Endothelial cell of umbilical vein (primary cell): ENCODE measurements at regions of chr7 and their contacts with region 1.

Region 1: DNA sequence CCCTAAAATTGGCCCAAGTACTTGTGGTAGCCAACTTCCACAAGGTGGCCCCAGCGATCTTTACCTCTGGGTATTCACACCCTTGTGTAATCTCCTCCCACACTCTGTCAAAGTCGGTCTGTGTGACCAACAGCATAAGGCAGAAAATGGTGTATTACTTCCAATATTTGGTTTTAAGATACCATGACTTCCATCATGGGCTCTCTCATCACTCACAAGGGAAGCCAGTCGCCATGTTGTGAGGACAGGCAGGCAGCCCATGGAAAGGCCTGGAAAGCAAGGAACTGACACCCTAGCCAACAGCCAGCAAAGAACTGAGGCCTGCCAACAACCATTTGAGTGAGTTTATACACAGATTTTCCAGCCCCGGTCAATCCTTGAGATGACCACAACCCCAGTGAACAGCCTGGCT is 91.0 kb upstream of the KMT2E start:
- DNase-seq: peak; percentile 95
- H3K4me3 ChIP-seq: no peak overlapping the region
- H3K27ac ChIP-seq: peak overlapping the region; percentile 50
- H3K4me1 ChIP-seq: peaks cover 15% of the 10 kb centered on the region
- H3K27me3 ChIP-seq: peaks cover 0 to 3% of the 10 kb centered on the region in 2 experiments
- CTCF ChIP-seq: peak; percentile 78 to 86
- POLR2A ChIP-seq: no peak

Region 2: DNA sequence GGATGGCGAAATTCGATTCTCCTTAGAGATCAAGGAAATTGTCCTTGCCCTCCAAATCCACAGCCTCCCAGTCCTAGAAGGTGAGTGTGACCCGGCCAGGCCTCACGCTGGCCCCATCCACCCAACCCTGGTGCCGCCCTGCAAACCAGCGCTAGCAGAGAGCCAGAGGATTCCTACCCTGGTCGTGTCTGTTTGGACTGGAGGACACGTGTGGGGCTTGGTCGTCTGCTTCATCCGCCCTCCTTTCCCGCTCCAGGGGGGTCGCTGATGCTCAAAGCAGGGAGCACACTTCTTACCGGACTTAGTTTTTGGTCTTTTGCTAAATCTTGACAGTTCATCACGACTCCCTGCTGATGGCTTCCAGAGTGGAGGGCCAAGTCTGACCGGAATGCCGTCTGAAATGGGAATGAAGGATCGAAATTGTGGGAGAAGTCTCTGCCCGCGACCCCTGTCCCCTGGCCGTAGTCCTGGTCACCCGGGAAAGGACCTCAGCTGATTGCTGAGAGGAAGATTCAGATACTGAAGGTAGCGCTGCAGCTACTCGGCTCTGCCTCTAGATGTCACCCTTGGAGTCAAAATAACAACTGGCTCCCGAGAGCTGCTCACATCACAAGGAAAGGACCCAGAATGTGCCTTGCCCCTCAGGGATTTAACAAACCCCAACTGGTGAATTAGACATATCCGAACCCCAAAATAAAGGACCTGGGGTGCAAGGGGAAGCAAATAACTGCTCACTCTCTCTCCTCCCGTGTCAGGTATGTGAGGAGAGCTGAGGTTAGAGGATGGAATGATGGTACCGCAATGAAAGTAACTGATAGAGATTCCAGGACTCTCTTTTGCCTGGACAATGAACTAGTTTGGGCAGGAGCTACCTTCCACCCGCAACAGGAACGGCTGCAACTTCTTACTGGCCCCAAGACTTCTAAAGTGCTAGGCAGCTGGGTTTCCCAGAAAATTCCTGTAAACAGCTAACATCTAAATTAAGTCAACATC is 691.7 kb before region 1 on chr7:
- CTCF ChIA-PET with region 1: interaction called, 49 read pairs
- POLR2A ChIA-PET with region 1: no interaction called
- dilution Hi-C with region 1: no loop called
- intact Hi-C with region 1: loop called (anchors 1 kb)
- DNase-seq: peak; percentile 49
- H3K4me3 ChIP-seq: no peak overlapping the region
- H3K27ac ChIP-seq: no peak overlapping the region
- H3K4me1 ChIP-seq: no peaks in the 10 kb centered on the region
- H3K27me3 ChIP-seq: peaks cover 6 to 29% of the 10 kb centered on the region in 2 experiments
- CTCF ChIP-seq: peak; percentile 70 to 85
- POLR2A ChIP-seq: no peak

Region 3: DNA sequence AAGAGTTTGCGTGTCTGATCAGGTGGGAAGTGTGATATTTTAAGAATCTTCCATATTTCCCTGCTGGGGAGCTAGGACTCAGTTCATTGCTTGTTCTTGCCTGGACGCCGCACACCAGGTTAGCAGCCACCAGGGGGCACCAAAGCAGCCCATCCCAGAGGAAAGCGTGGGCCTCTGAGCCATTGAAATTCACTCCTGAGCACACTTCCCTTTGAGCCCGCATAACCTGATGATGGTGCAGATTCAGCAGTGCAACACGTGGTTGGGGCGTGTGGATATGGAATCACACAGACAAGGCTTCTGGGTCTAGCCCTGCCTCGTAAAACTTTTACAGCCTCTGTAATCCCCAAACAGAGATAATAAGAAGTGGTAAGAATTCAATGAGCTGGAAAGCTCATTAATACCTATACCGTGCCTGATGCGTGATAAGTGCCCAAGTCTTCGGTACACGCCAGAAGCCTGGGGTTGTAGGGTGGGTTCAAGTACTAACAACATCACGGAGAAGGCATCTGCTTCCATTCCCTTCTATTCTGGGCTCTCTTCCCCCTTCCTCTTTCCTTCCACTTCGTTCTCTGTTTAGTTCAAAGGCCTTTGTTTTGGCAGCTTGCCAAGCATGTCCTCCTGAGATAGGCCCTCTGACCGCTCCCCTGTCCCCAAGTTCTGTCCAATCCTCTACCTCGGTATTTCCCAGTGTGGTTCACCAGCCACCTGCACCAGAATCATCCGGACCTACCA is 39.1 kb before region 1 on chr7:
- CTCF ChIA-PET with region 1: interaction called, 228 read pairs
- POLR2A ChIA-PET with region 1: interaction called, 4 read pairs
- dilution Hi-C with region 1: no loop called
- intact Hi-C with region 1: loop called (anchors 1 kb)
- DNase-seq: peak; percentile 87
- H3K4me3 ChIP-seq: peak overlapping the region in 1 of 3 experiments; percentile 35
- H3K27ac ChIP-seq: peak overlapping the region; percentile 31
- H3K4me1 ChIP-seq: peaks cover 5% of the 10 kb centered on the region
- H3K27me3 ChIP-seq: peaks cover 2 to 3% of the 10 kb centered on the region in 2 experiments
- CTCF ChIP-seq: peak; percentile 96 to 97
- POLR2A ChIP-seq: no peak

Region 4: GRCh38 chr7:104943502-104944343 is 20.7 kb after region 1 on chr7:
- CTCF ChIA-PET with region 1: interaction called, 8 read pairs
- POLR2A ChIA-PET with region 1: no interaction called
- dilution Hi-C with region 1: no loop called
- intact Hi-C with region 1: loop called (anchors 1 kb)
- DNase-seq: peak; percentile 100
- H3K4me3 ChIP-seq: no peak overlapping the region
- H3K27ac ChIP-seq: peak overlapping the region; percentile 86
- H3K4me1 ChIP-seq: peaks cover 35% of the 10 kb centered on the region
- H3K27me3 ChIP-seq: no peaks in the 10 kb centered on the region
- CTCF ChIP-seq: no peak
- POLR2A ChIP-seq: no peak

Region 5: GRCh38 chr7:105046414-105046813 is 123.4 kb after region 1 on chr7:
- CTCF ChIA-PET with region 1: interaction called, 7 read pairs
- POLR2A ChIA-PET with region 1: no interaction called
- dilution Hi-C with region 1: no loop called
- intact Hi-C with region 1: loop called (anchors 1 kb)
- DNase-seq: no peak
- H3K4me3 ChIP-seq: no peak overlapping the region
- H3K27ac ChIP-seq: no peak overlapping the region
- H3K4me1 ChIP-seq: no peaks in the 10 kb centered on the region
- H3K27me3 ChIP-seq: no peaks in the 10 kb centered on the region
- CTCF ChIP-seq: no peak
- POLR2A ChIP-seq: no peak

Region 6: DNA sequence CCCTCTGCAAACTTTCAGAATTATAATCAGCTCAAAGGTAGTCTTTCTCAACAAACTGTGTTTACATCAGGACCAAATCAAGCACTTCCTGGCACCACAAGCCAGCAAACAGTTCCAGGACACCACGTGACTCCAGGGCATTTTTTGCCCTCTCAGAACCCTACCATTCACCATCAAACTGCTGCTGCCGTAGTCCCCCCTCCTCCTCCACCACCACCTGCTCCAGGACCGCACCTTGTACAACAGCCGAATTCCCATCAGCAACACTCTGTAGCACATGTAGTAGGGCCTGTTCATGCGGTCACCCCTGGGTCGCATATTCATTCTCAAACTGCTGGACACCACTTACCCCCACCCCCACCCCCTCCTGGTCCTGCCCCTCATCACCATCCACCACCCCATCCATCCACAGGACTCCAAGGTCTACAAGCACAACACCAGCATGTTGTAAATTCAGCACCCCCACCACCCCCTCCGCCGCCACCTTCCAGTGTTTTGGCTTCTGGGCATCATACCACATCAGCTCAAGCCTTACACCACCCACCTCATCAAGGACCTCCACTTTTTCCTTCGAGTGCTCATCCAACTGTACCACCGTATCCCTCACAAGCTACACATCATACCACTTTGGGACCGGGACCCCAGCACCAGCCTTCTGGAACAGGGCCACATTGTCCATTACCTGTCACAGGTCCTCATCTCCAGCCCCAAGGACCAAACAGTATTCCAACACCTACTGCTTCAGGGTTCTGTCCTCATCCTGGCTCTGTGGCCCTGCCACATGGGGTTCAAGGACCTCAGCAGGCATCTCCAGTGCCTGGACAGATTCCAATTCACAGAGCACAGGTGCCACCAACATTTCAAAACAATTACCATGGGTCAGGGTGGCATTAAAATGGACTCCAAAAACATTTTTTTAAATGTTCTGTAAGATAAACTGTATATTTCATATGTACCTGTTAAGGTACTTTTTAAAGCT is 189.7 kb after region 1 on chr7:
- CTCF ChIA-PET with region 1: no interaction called
- POLR2A ChIA-PET with region 1: no interaction called
- dilution Hi-C with region 1: no loop called
- intact Hi-C with region 1: no loop called
- DNase-seq: no peak
- H3K4me3 ChIP-seq: no peak overlapping the region
- H3K27ac ChIP-seq: no peak overlapping the region
- H3K4me1 ChIP-seq: no peaks in the 10 kb centered on the region
- H3K27me3 ChIP-seq: no peaks in the 10 kb centered on the region
- CTCF ChIP-seq: no peak
- POLR2A ChIP-seq: no peak

Region 7: DNA sequence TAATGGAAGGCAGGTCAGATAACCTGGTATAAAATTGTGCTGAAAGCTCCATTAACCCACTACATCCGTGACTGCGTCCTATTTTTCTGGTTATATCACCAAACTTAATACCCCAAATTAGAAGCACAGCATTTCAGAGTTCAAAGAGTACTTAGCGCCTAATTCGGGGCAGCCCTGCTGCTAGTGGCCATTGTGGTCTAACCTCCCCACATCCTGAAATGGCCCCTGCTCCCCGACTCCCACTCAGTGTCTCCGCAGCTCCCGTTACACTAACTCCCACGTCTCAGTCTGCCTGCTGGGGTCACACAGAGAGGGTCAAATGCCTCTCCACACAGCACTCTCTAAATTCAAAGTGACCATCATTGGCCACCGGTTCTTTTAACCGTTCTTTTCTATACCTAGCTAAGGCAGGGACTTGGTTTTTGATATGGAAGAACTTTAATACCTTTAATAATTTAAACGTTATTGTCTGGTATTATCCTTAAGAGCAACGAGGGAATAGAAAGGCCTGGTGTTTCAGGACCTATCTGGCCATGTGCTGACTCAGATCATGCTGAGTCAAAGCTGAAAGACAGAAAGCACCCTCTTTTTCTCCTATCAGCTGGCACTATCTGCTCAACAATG is 208.1 kb after region 1 on chr7:
- CTCF ChIA-PET with region 1: no interaction called
- POLR2A ChIA-PET with region 1: no interaction called
- dilution Hi-C with region 1: no loop called
- intact Hi-C with region 1: no loop called
- DNase-seq: no peak
- H3K4me3 ChIP-seq: no peak overlapping the region
- H3K27ac ChIP-seq: no peak overlapping the region
- H3K4me1 ChIP-seq: peaks cover 7% of the 10 kb centered on the region
- H3K27me3 ChIP-seq: no peaks in the 10 kb centered on the region
- CTCF ChIP-seq: no peak
- POLR2A ChIP-seq: no peak

Region 8: GRCh38 chr7:105261688-105262087 is 338.7 kb after region 1 on chr7:
- CTCF ChIA-PET with region 1: no interaction called
- POLR2A ChIA-PET with region 1: no interaction called
- dilution Hi-C with region 1: no loop called
- intact Hi-C with region 1: no loop called
- DNase-seq: no peak
- H3K4me3 ChIP-seq: no peak overlapping the region
- H3K27ac ChIP-seq: no peak overlapping the region
- H3K4me1 ChIP-seq: peaks cover 2% of the 10 kb centered on the region
- H3K27me3 ChIP-seq: no peaks in the 10 kb centered on the region
- CTCF ChIP-seq: no peak
- POLR2A ChIP-seq: no peak

Region 9: GRCh38 chr7:105336009-105336408 is 413.0 kb after region 1 on chr7:
- CTCF ChIA-PET with region 1: no interaction called
- POLR2A ChIA-PET with region 1: no interaction called
- dilution Hi-C with region 1: no loop called
- intact Hi-C with region 1: loop called (anchors 1 kb)
- DNase-seq: peak; percentile 35
- H3K4me3 ChIP-seq: no peak overlapping the region
- H3K27ac ChIP-seq: no peak overlapping the region
- H3K4me1 ChIP-seq: peaks cover 3% of the 10 kb centered on the region
- H3K27me3 ChIP-seq: no peaks in the 10 kb centered on the region
- CTCF ChIP-seq: peak in 1 of 2 donors; percentile 15
- POLR2A ChIP-seq: no peak

Region 10: DNA sequence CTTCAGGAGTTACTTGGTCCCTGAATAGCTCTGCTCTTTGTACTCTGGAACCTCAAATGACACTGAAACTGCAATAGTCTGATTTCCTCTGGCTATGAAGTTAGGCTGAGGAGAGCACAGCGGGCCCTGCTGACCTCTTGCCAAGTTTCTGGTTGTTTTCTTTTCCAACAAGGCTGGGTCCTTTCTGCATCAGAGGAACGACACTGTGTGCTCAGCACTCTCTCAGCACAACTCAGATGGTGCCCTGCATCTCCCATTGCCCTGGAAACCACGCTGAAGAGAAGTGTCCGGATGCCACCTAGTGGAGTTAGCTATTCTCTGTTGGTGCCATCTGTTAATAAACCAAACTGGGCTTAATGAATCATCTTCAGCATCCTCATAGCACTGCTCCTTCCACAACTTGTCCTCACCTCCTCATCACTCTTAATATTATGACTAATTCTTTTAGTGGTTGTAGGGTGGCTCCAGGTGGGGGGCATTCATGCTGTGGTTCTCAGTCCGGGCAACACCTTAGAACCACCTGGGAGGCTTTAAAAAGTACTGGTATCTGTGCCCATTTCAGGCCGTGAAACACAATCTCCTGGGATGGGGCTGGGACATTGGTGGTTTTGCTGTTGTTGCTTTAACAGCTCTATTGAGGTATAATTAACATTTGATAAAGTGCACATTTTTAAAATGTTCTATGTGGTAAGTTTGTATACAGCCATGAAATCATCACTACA is 666.5 kb after region 1 on chr7:
- CTCF ChIA-PET with region 1: interaction called, 6 read pairs
- POLR2A ChIA-PET with region 1: no interaction called
- dilution Hi-C with region 1: no loop called
- intact Hi-C with region 1: loop called (anchors 5 kb)
- DNase-seq: peak; percentile 81
- H3K4me3 ChIP-seq: no peak overlapping the region
- H3K27ac ChIP-seq: no peak overlapping the region
- H3K4me1 ChIP-seq: peaks cover 8% of the 10 kb centered on the region
- H3K27me3 ChIP-seq: no peaks in the 10 kb centered on the region
- CTCF ChIP-seq: peak; percentile 67 to 75
- POLR2A ChIP-seq: no peak